Activated CD4-positive, alpha-beta T cell treated with anti-CD3 and anti-CD28 coated beads for 36 hours (primary cell): ENCODE measurements at regions of chr14 and their contacts with region 1.

Region 1: DNA sequence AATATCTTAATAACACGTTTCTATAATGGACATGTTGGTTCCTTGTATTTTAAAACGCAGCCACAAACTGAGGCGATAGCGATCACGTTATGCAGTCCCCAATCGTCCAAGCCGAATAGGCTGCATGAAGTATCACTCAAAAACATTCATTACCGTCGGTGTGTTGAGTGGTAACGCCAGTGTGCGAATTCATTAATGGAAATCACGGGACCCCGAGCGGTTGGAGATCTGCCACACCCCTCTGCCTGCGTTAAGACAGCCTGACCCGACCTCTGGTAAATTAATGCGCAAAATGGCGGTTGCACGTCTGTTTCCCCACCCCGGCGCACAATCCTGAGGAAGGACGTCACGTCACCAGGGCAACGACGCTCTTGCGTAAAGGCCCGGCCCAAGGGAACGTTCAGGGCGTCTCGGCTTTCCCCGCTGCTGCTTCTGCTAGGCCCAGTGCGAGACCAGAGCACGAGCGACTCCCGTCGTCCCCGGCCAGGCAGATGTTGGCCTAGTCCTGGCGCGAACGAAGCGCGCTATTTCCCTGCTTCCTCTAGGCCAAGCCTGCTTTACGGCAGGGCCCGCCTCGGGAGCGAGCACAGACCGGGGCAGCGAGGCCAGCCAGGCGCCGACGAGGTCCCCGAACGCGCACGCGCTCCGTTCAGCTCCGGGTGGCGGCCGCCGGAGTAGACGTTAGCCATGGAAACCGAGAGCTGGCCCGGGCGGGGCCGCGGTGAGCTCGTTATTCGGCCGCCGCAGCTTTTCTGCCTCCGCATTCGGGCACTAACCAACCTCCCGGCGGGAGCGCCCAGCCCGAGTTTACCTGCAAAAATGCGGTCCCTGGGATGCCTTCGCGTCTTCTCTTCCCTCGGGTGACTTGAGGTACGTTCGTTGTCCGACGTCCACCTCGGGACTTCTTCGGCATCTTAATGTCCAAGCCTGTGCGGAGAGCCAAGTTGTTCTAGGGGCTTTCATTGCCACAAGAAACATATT is at the start of gene PCNX4:
- DNase-seq: peak; percentile 96
- ATAC-seq: peak; percentile 96
- H3K4me3 Mint-ChIP-seq: peak within 1 kb of the TSS; percentile 91
- H3K27ac Mint-ChIP-seq: peak within 1 kb of the TSS; percentile 92
- H3K4me1 Mint-ChIP-seq: peaks cover 34% of the 10 kb centered on the region
- H3K27me3 Mint-ChIP-seq: no peaks in the 10 kb centered on the region
- total RNA-seq, gene PCNX4: 27.0 to 27.6 TPM

Region 2: GRCh38 chr14:58641509-58641908 is 1450.3 kb before region 1 on chr14:
- CTCF ChIA-PET with region 1: no interaction called
- POLR2A ChIA-PET with region 1: no interaction called
- intact Hi-C with region 1: no loop called
- DNase-seq: no peak
- ATAC-seq: no peak
- H3K4me3 Mint-ChIP-seq: no peak overlapping the region
- H3K27ac Mint-ChIP-seq: no peak overlapping the region
- H3K4me1 Mint-ChIP-seq: peaks cover 26% of the 10 kb centered on the region
- H3K27me3 Mint-ChIP-seq: peaks cover 10% of the 10 kb centered on the region

Region 3: DNA sequence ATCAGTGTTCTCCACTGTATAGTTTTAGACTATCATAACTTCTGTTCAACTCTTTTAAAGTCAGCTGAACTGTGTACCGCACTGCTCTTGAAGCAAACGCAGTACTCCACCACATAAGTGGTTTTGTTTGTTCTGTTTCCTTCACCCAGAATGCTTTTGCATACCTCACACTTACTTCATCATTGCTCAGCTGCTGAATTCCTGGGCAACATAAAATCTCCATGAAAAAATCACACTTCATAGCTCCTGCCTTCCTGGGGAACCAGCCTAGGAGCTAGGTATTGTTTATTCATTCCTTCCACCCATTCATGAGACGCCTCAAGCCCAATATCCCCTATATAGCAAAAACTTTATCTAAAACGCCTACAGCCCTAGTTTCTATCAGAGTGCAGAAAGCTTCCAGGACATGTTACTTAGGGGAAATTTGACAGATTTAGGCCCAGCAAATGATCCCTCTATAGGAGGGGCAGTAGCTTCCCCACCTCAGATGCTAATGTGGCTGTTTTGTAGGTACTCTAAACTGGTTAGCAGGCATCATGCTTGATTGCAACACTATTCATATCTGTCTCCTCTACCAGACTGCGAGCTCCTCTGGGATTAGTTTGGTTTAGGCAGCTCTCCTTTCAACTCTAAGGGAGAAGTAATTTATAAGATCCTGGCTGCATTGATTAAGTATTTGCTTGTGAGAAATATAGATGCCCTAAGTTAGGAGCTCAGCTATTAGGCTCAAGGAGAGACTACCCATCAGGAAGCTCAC is 127.4 kb before region 1 on chr14:
- CTCF ChIA-PET with region 1: interaction called, 8 read pairs
- POLR2A ChIA-PET with region 1: interaction called, 3 read pairs
- intact Hi-C with region 1: loop called (anchors 1 to 2 kb)
- DNase-seq: peak; percentile 3
- ATAC-seq: peak; percentile 14
- H3K4me3 Mint-ChIP-seq: peak overlapping the region; percentile 82
- H3K27ac Mint-ChIP-seq: peak overlapping the region; percentile 95
- H3K4me1 Mint-ChIP-seq: peaks cover 19% of the 10 kb centered on the region
- H3K27me3 Mint-ChIP-seq: peaks cover 5% of the 10 kb centered on the region

Region 4: GRCh38 chr14:60125918-60126317 is 34.1 kb after region 1 on chr14:
- CTCF ChIA-PET with region 1: no interaction called
- POLR2A ChIA-PET with region 1: no interaction called
- intact Hi-C with region 1: no loop called
- DNase-seq: no peak
- ATAC-seq: no peak
- H3K4me3 Mint-ChIP-seq: no peak overlapping the region
- H3K27ac Mint-ChIP-seq: no peak overlapping the region
- H3K4me1 Mint-ChIP-seq: no peaks in the 10 kb centered on the region
- H3K27me3 Mint-ChIP-seq: no peaks in the 10 kb centered on the region

Region 5: DNA sequence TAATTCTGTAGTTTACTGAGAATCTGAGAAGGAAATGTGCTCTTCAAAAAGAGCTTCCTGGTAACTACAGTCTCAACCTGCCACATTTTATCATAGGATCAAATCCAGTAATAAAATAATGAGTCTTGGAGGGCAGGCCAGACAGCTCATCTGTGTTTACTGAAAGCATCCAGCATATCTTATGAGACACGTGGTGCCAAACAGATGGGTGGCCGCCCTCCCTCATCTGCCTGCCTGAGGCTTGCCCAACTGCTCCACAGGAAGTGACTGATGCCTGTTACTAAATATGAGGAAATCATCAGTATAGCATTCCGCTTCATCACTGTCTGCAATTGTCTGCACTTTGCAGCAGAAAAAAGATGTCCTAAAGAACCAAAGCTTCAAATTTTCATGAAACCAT is 59.9 kb after region 1 on chr14:
- CTCF ChIA-PET with region 1: interaction called, 3 read pairs
- POLR2A ChIA-PET with region 1: no interaction called
- intact Hi-C with region 1: loop called in 1 of 2 experiments (anchors 2 kb)
- DNase-seq: peak; percentile 83
- ATAC-seq: peak; percentile 99
- H3K4me3 Mint-ChIP-seq: no peak overlapping the region
- H3K27ac Mint-ChIP-seq: peak overlapping the region; percentile 70
- H3K4me1 Mint-ChIP-seq: peaks cover 36% of the 10 kb centered on the region
- H3K27me3 Mint-ChIP-seq: no peaks in the 10 kb centered on the region

Region 6: GRCh38 chr14:60248697-60249318 is 157.0 kb after region 1 on chr14 and contains the start of gene PPM1A:
- CTCF ChIA-PET with region 1: interaction called, 3 read pairs
- POLR2A ChIA-PET with region 1: interaction called, 3 read pairs
- intact Hi-C with region 1: loop called (anchors 1 kb)
- DNase-seq: peak; percentile 97
- ATAC-seq: peak; percentile 73
- H3K4me3 Mint-ChIP-seq: peak within 1 kb of the TSS; percentile 94
- H3K27ac Mint-ChIP-seq: peak within 1 kb of the TSS; percentile 100
- H3K4me1 Mint-ChIP-seq: peaks cover 50% of the 10 kb centered on the region
- H3K27me3 Mint-ChIP-seq: no peaks in the 10 kb centered on the region
- total RNA-seq, gene PPM1A: 30.4 to 41.5 TPM